CD14-positive monocyte (primary cell): ENCODE measurements at regions of chr17 and their contacts with region 1.

Region 1: DNA sequence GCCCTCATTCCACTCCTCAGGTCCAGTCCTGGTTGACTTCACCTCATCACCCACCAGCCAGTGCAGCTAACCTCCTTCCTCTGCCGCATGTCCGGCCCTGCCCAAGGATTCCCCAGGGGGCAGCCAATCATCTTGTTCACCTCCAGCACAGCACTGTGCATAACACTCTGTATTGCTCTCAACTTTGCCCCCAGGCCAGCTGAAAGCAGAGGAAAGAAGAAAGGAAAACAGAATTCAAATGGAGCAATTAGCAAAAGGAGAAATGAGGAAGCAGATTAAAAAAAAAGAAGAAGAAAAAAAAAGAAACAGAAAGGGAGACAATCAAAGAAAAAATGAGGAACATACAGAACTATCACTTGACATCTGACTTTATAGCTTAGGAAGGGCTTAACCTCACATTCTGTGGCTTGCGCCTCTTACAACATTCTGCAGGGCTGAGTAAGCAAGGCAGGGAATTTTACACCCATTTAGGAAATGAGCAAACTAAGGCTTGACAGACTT is 26.1 kb downstream of the GAS7 start:
- DNase-seq: peak; percentile 85 to 96 (median 96)
- H3K4me3 ChIP-seq: peak overlapping the region in 1 of 3 experiments; percentile 65
- H3K4me3 Mint-ChIP-seq: peak overlapping the region; percentile 76 to 89
- H3K27ac ChIP-seq: peak overlapping the region; percentile 89 to 92
- H3K27ac Mint-ChIP-seq: peak overlapping the region; percentile 96 to 100 (median 99)
- H3K4me1 ChIP-seq: peaks cover 55 to 71% of the 10 kb centered on the region in 2 donors
- H3K4me1 Mint-ChIP-seq: peaks cover 86% of the 10 kb centered on the region
- H3K27me3 ChIP-seq: no peaks in the 10 kb centered on the region
- H3K27me3 Mint-ChIP-seq: peaks cover 0 to 4% (median 0%) of the 10 kb centered on the region in 3 donors
- CTCF ChIP-seq: no peak

Region 2: GRCh38 chr17:10115071-10115539 is 57.2 kb before region 1 on chr17:
- intact Hi-C with region 1: loop called in 1 of 2 experiments (anchors 10 kb)
- DNase-seq: peak; percentile 94 to 98 (median 96)
- H3K4me3 ChIP-seq: peak overlapping the region; percentile 1 to 62 (median 27)
- H3K4me3 Mint-ChIP-seq: peak overlapping the region; percentile 75 to 89
- H3K27ac ChIP-seq: peak overlapping the region; percentile 98 to 99
- H3K27ac Mint-ChIP-seq: peak overlapping the region; percentile 99 to 100 (median 100)
- H3K4me1 ChIP-seq: peaks cover 74 to 82% of the 10 kb centered on the region in 2 donors
- H3K4me1 Mint-ChIP-seq: peaks cover 85% of the 10 kb centered on the region
- H3K27me3 ChIP-seq: no peaks in the 10 kb centered on the region
- H3K27me3 Mint-ChIP-seq: peaks cover 0 to 9% (median 2%) of the 10 kb centered on the region in 3 donors
- CTCF ChIP-seq: no peak

Region 3: DNA sequence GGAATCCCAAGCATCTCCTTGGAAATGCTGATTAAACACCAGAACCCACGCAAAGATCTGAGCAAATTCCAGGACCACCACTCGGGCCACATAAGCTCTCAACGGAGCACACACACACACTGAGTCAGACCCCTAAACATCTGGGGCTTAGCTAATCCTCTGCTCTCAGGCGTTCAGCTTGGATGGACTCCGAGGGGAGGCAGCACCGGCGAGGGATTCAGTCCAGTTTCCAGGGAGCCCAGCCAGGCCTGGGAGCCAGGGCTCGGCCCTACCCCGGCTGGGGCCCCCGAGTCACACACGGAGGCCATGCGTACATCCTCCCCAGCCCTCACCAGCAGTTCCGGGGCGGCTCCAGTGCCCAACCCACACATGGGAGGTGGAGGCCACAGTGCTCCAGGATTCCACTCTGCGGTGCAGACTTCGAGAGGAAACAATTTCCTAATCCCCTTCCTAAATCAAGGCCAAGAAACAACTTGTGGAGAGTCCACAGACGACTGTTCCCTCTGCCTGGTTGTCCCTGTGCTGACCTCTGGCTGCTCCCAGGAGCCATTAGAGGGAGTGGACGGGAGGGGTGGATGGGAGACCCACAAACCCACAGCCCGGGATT is 44.4 kb before region 1 on chr17:
- intact Hi-C with region 1: loop called in 1 of 2 experiments (anchors 5 kb)
- DNase-seq: peak in 2 of 3 donors; percentile 40 to 51
- H3K4me3 ChIP-seq: peak overlapping the region in 1 of 3 experiments; percentile 50
- H3K4me3 Mint-ChIP-seq: peak overlapping the region; percentile 52 to 59
- H3K27ac ChIP-seq: peak overlapping the region; percentile 84 to 86
- H3K27ac Mint-ChIP-seq: peak overlapping the region; percentile 79 to 96 (median 89)
- H3K4me1 ChIP-seq: peaks cover 45 to 47% of the 10 kb centered on the region in 2 donors
- H3K4me1 Mint-ChIP-seq: peaks cover 65% of the 10 kb centered on the region
- H3K27me3 ChIP-seq: no peaks in the 10 kb centered on the region
- H3K27me3 Mint-ChIP-seq: peaks cover 0 to 3% (median 0%) of the 10 kb centered on the region in 3 donors
- CTCF ChIP-seq: no peak